Naive thymus-derived CD8-positive, alpha-beta T cell (primary cell): ENCODE measurements at regions of chr4 and their contacts with region 1.

Region 1: GRCh38 chr4:139453371-139454110 is 380 bp upstream of the RAB33B start:
- DNase-seq: peak; percentile 93 to 99 (median 98)
- ATAC-seq: peak; percentile 86
- H3K4me3 Mint-ChIP-seq: peak overlapping the region; percentile 89 to 99 (median 97)
- H3K27ac Mint-ChIP-seq: peak overlapping the region; percentile 94 to 100 (median 98)
- H3K4me1 Mint-ChIP-seq: peaks cover 38 to 61% (median 55%) of the 10 kb centered on the region in 4 donors
- H3K27me3 Mint-ChIP-seq: no peaks in the 10 kb centered on the region

Region 2: DNA sequence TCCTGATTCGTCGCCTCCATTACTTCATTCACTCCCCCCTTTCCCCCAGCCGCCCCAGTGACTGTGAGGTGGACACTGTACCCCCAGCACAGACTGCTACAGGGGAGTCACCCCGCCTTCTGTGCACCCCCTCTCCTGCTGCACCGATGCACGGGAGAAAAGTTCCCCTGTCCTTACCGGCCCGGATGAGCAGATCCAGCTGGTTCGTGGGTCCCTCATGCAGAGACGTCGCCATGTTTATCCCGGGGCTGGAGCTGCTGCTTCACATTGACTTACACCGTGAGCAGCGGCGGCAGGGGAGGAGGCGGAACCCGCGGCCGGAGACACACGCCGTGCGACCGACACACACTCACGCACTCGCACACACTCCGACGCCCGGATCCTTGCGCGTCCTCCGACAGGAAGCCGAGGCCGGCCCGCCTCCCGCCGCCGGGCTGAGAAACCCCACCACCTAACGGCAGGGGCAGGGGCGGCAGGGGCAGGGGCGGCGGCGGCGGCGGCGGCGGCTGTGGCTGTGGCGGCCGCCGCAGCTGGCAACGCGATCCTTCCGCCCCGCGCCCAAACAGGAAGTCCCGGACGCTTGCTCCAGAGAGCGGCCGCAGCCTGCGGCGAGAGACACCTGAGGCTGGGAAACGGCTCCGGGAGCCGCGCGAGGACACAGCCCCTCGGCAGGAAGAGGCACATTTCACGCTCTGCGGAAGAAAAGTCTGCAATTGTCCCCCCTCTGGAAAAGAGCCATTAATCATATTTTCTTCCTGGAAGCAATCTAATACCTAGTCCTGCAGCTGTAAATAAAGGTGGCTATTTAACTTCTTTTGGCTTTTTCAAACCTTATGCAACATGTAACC is 369.4 kb before region 1 on chr4:
- POLR2A ChIA-PET with region 1: interaction called, 11 read pairs
- DNase-seq: peak; percentile 67 to 91 (median 79)
- ATAC-seq: peak; percentile 50 to 57
- H3K4me3 Mint-ChIP-seq: peak overlapping the region; percentile 81 to 100 (median 98)
- H3K27ac Mint-ChIP-seq: peak overlapping the region; percentile 95 to 100 (median 97)
- H3K4me1 Mint-ChIP-seq: peaks cover 11 to 50% (median 33%) of the 10 kb centered on the region in 4 donors
- H3K27me3 Mint-ChIP-seq: no peaks in the 10 kb centered on the region

Region 3: DNA sequence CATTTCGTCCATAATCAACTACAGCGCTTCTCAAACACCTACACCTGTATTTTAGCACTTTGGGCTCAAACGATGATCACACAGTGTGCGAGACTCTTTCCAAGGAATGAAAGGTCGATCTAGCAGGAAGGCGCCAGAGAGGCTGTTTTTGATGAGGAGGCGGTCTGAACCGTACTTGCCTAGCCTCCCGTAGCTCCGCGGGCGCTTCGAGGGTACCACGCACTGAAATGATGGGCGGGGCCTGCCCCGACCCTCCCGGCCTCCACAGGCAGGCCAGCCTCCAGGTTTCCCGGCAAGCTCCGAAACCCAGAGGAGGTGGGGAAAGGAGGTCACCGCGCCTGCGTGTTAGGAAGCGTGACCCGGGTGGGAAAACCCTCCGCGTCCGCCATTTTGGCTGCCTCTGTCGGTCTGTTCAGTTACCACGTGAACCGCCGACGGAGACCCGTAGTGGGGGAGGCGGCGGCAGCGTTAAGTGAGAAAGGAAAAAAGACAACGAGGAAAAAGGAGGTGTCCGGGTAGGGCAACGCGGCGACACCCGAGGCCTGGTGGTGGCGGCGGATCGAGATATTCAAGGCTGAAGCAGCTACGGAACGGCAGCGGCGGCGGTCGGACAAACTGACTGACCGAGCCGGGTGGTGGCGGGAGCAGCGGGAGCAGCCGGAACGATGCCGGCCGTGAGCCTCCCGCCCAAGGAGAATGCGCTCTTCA is 152.3 kb before region 1 on chr4 and contains the start of gene NAA15:
- POLR2A ChIA-PET with region 1: interaction called, 21 read pairs
- DNase-seq: peak; percentile 93 to 99 (median 98)
- ATAC-seq: peak; percentile 90 to 91
- H3K4me3 Mint-ChIP-seq: peak within 1 kb of the TSS; percentile 96 to 100 (median 99)
- H3K27ac Mint-ChIP-seq: peak within 1 kb of the TSS; percentile 98 to 100 (median 99)
- H3K4me1 Mint-ChIP-seq: peaks cover 14 to 71% (median 50%) of the 10 kb centered on the region in 4 donors
- H3K27me3 Mint-ChIP-seq: no peaks in the 10 kb centered on the region
- polyA plus RNA-seq, gene NAA15: 32.1 to 41.8 (median 36.1) TPM

Region 4: DNA sequence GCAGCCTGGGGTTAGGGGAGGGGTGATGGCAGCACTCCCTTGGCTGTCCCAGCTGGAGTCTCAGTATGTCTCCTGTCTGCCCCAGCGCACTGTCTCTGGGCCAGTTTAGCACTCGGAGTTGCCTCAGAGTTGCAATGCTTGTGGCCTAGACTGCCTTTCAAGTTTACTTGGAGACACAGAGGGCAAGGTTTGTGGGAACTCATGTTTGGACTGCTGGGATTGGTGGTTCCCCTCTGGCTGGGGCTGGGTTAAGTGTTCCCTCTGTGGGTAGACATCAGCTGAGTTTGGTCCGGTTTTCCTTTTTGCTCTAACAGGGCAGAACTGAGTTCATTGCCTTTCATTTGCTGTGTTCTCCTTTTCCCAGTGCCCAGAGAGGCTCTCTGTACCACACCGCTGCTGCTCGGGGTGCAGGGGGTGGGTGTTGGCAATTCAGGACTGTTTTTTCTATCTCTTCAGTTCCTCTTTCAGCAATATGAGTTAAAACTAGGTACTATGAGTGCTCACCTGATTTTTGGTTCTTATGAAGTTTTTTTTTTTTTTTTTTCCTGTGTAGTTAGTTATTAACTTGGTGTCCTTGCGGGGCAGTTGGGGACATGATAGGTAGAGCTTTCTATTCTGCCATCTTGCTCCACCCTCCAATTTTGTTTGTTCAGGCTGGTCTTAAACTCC is 17.6 kb after region 1 on chr4:
- POLR2A ChIA-PET with region 1: no interaction called
- DNase-seq: no peak
- ATAC-seq: no peak
- H3K4me3 Mint-ChIP-seq: no peak overlapping the region
- H3K27ac Mint-ChIP-seq: no peak overlapping the region
- H3K4me1 Mint-ChIP-seq: peaks cover 20 to 31% (median 28%) of the 10 kb centered on the region in 4 donors
- H3K27me3 Mint-ChIP-seq: no peaks in the 10 kb centered on the region

Region 5: GRCh38 chr4:139556071-139556746 is 102.7 kb after region 1 on chr4 and contains the start of gene SETD7:
- POLR2A ChIA-PET with region 1: interaction called, 11 read pairs
- DNase-seq: peak; percentile 10 to 74 (median 34)
- ATAC-seq: peak; percentile 29 to 36
- H3K4me3 Mint-ChIP-seq: peak within 1 kb of the TSS; percentile 91 to 98 (median 95)
- H3K27ac Mint-ChIP-seq: peak within 1 kb of the TSS; percentile 87 to 98 (median 95)
- H3K4me1 Mint-ChIP-seq: peaks cover 13 to 56% (median 35%) of the 10 kb centered on the region in 4 donors
- H3K27me3 Mint-ChIP-seq: peaks cover 0 to 16% (median 3%) of the 10 kb centered on the region in 5 donors
- polyA plus RNA-seq, gene SETD7: 0.09 to 0.36 (median 0.32) TPM